ENCODE measurements at regions of chr19 and their contacts with region 1.

Region 1: GRCh38 chr19:6460101-6460853 is 685 bp upstream of the SLC25A23 start:
- DNase-seq: peak; percentile 97
- ATAC-seq: peak; percentile 71
- H3K4me3 Mint-ChIP-seq: peak overlapping the region; percentile 98
- H3K27ac Mint-ChIP-seq: peak overlapping the region; percentile 99
- H3K4me1 Mint-ChIP-seq: peaks cover 19% of the 10 kb centered on the region
- H3K27me3 Mint-ChIP-seq: peaks cover 13% of the 10 kb centered on the region
- CTCF ChIP-seq: peak; percentile 50

Region 2: GRCh38 chr19:6212403-6213265 is 247.6 kb before region 1 on chr19:
- CTCF ChIA-PET with region 1: no interaction called
- POLR2A ChIA-PET with region 1: no interaction called
- DNase-seq: no peak
- ATAC-seq: no peak
- H3K4me3 Mint-ChIP-seq: no peak overlapping the region
- H3K27ac Mint-ChIP-seq: no peak overlapping the region
- H3K4me1 Mint-ChIP-seq: no peaks in the 10 kb centered on the region
- H3K27me3 Mint-ChIP-seq: no peaks in the 10 kb centered on the region
- CTCF ChIP-seq: no peak

Region 3: DNA sequence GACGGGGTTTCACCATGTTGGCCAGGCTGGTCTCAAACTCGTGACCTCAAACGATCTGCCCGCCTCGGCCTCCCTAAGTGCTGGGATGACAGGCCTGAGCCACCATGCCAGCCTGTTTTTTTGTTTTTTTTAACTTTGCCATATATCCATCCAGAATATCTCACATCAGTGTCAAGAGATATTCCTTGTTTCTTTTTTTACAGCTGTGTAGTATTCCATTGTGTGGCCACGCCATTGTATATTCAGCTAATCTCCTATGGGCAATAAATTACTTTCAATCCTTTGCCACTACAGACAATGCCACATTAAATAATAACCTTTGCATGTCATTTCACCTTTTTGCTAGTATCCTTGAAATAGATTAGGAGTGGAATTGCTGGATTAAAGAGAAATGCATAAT is 50.9 kb before region 1 on chr19:
- CTCF ChIA-PET with region 1: no interaction called
- POLR2A ChIA-PET with region 1: no interaction called
- DNase-seq: no peak
- ATAC-seq: no peak
- H3K4me3 Mint-ChIP-seq: no peak overlapping the region
- H3K27ac Mint-ChIP-seq: no peak overlapping the region
- H3K4me1 Mint-ChIP-seq: peaks cover 6% of the 10 kb centered on the region
- H3K27me3 Mint-ChIP-seq: no peaks in the 10 kb centered on the region
- CTCF ChIP-seq: no peak

Region 4: GRCh38 chr19:6476155-6476895 is 16.0 kb after region 1 on chr19:
- CTCF ChIA-PET with region 1: interaction called, 10 read pairs
- POLR2A ChIA-PET with region 1: interaction called, 9 read pairs
- DNase-seq: peak; percentile 100
- ATAC-seq: peak; percentile 88
- H3K4me3 Mint-ChIP-seq: peak overlapping the region; percentile 81
- H3K27ac Mint-ChIP-seq: peak overlapping the region; percentile 95
- H3K4me1 Mint-ChIP-seq: peaks cover 8% of the 10 kb centered on the region
- H3K27me3 Mint-ChIP-seq: peaks cover 30% of the 10 kb centered on the region
- CTCF ChIP-seq: no peak

Region 5: GRCh38 chr19:6663236-6664201 is 203.2 kb after region 1 on chr19:
- CTCF ChIA-PET with region 1: no interaction called
- POLR2A ChIA-PET with region 1: no interaction called
- DNase-seq: no peak
- ATAC-seq: no peak
- H3K4me3 Mint-ChIP-seq: no peak overlapping the region
- H3K27ac Mint-ChIP-seq: no peak overlapping the region
- H3K4me1 Mint-ChIP-seq: no peaks in the 10 kb centered on the region
- H3K27me3 Mint-ChIP-seq: peaks cover 5% of the 10 kb centered on the region; the same call in 1 of the 2 replicates
- CTCF ChIP-seq: no peak

Measured in WTC11 (cell line).